ENCODE measurements at regions of chr11 and their contacts with region 1.

Region 1: GRCh38 chr11:45655347-45655756 is 10.1 kb downstream of the CHST1 start:
- DNase-seq: peak; percentile 88
- H3K4me3 ChIP-seq: no peak overlapping the region
- H3K27ac ChIP-seq: peak overlapping the region in 1 of 8 donors; percentile 2
- H3K4me1 ChIP-seq: peaks cover 11 to 48% (median 29%) of the 10 kb centered on the region in 6 donors
- H3K27me3 ChIP-seq: peaks cover 0 to 73% (median 8%) of the 10 kb centered on the region in 7 donors
- CTCF ChIP-seq: peak; percentile 42 to 95 (median 81)
- POLR2A ChIP-seq: no peak

Region 2: DNA sequence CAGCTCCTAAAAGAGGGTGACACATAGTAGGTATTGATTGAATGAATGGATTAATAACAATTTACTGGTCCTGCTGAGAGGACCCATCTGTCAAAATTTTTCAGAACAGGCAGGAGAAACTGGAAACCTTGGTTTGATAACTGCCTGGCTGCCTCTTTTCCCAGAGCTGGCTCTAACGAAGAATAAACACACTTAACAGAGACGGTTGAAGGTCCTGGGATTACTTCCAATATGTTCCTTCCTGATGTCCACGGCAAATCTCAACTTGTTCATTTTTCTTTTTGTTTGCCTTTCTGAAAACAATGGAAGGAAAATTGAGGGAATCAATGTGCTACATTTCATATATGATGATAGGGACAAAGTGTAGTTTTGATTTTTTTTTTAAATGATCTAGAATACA is 292.7 kb before region 1 on chr11:
- intact Hi-C with region 1: loop called (anchors 5 kb)
- DNase-seq: no peak
- H3K4me3 ChIP-seq: no peak overlapping the region
- H3K27ac ChIP-seq: peak overlapping the region in 2 of 8 donors; percentile 24 to 45
- H3K4me1 ChIP-seq: peaks cover 0 to 21% (median 12%) of the 10 kb centered on the region in 6 donors
- H3K27me3 ChIP-seq: no peaks in the 10 kb centered on the region
- CTCF ChIP-seq: no peak
- POLR2A ChIP-seq: no peak

Region 3: GRCh38 chr11:45859661-45860140 is 204.3 kb after region 1 on chr11:
- intact Hi-C with region 1: no loop called
- DNase-seq: peak; percentile 89
- H3K4me3 ChIP-seq: no peak overlapping the region
- H3K27ac ChIP-seq: peak overlapping the region in 6 of 8 donors; percentile 9 to 78 (median 60)
- H3K4me1 ChIP-seq: peaks cover 29 to 55% (median 33%) of the 10 kb centered on the region in 6 donors
- H3K27me3 ChIP-seq: no peaks in the 10 kb centered on the region
- CTCF ChIP-seq: no peak
- POLR2A ChIP-seq: no peak